Activated CD4-positive, alpha-beta T cell treated with anti-CD3 and anti-CD28 coated beads, Interleukin-2, amount 10 ng/mL, durations not matched to agents 24 days and 14 days (primary cell): ENCODE measurements at regions of chr6 and their contacts with region 1.

Region 1: DNA sequence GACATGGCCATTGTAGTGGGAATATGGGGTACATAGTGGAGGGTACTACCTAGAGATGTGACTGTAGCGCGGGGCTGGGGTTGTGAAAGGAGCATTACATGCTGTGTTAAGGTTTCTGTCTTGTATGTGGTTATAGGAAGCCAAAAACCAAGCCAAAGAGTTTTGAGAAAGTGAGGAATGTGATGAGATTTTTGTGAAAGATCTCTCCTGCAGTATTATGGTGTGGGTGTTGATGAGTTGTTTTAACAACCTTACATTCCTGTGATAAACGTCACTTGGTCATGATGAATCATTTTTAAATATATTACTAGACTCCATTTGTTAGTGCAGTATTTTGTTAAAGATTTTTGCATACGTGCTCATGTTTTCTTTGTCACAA is 48.9 kb downstream of the ZFAND3 start:
- DNase-seq: no peak
- H3K4me3 Mint-ChIP-seq: peak overlapping the region; percentile 53
- H3K27ac Mint-ChIP-seq: peak overlapping the region; percentile 72
- H3K4me1 Mint-ChIP-seq: peaks cover 35% of the 10 kb centered on the region
- H3K27me3 Mint-ChIP-seq: no peaks in the 10 kb centered on the region

Region 2: DNA sequence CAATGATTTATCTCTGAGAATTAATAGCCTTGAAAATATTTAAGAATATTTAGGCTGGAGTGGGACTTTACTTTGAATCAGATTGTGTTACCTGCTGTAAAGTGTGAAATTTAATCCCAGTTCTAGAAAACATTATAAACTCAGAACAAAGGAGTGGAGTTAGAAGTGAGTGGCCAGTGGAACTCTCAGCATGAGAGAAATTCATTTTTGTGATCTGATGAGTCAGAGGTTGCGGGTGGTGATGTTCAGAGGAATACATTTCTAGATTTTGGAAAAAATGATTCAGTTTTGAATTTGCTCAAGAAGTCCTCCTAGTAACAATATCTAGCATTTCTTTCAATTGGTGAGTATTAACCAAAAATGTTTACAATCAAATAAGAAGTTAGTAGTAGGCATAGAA is 118.6 kb after region 1 on chr6:
- intact Hi-C with region 1: loop called (anchors 5 kb)
- DNase-seq: no peak
- H3K4me3 Mint-ChIP-seq: no peak overlapping the region
- H3K27ac Mint-ChIP-seq: peak overlapping the region; percentile 46
- H3K4me1 Mint-ChIP-seq: peaks cover 29% of the 10 kb centered on the region
- H3K27me3 Mint-ChIP-seq: no peaks in the 10 kb centered on the region